Aorta (tissue), 5 donors: ENCODE measurements at regions of chr17 and their contacts with region 1.

Region 1: GRCh38 chr17:13940858-13941665 is 128.2 kb upstream of the COX10 start:
- DNase-seq: no peak
- ATAC-seq: no peak
- H3K4me3 ChIP-seq: no peak overlapping the region
- H3K27ac ChIP-seq: no peak overlapping the region
- H3K4me1 ChIP-seq: no peaks in the 10 kb centered on the region
- H3K27me3 ChIP-seq: no peaks in the 10 kb centered on the region

Region 2: DNA sequence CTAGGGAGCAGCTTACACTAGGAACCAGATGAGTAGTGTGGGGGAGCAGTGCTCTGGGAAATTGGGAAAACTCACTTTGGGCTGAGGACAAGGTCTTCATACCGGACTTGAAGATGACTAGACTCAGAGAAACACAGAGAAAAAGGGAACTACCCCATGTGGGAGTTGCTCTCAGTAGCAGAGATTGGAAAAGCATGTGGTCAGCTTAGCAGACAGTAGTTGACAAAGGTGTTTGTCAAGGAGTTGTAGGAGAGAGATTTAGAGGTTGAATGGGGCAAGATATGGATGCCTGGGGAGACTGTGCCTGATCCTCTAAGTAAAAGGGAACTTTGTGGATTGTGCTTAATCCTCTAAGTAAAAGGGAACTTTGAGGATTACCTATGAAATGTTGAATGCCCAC is 66.2 kb before region 1 on chr17:
- intact Hi-C with region 1: no loop called
- DNase-seq: no peak
- ATAC-seq: no peak
- H3K4me3 ChIP-seq: no peak overlapping the region
- H3K27ac ChIP-seq: no peak overlapping the region
- H3K4me1 ChIP-seq: no peaks in the 10 kb centered on the region
- H3K27me3 ChIP-seq: no peaks in the 10 kb centered on the region

Region 3: DNA sequence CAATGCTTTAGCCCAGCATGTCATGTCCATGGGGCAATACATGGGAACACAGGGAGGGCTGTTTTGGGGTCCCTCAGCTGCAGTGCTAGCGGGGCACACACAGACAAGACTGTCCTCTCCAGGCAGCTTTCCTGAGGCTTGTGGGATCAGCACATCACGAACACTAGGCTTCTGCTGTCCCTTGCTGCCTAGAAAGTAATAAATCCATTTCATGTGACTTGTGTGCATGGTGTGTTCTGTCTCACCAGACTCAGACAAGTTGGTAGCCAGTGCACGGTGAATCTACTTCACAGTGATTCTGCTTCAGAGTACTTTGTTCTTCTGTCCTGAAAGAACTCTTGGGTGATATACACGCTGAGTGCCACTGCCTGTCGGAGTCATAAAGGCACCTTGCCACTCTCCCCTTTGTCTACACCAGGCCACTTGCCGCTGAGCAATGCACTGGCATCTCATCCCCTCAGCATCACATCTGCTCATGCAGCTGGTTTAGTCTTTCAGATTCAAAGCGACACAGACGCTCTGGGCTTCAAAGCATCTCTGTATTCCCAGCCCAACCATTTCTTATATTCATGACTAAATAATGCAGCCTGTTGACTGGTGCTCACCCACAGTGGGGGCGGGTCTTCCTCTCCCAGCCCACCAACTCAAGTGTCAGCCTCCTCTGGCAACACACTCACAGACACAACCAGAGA is 33.0 kb after region 1 on chr17:
- intact Hi-C with region 1: no loop called
- DNase-seq: no peak
- ATAC-seq: no peak
- H3K4me3 ChIP-seq: no peak overlapping the region
- H3K27ac ChIP-seq: no peak overlapping the region
- H3K4me1 ChIP-seq: no peaks in the 10 kb centered on the region
- H3K27me3 ChIP-seq: no peaks in the 10 kb centered on the region

Region 4: DNA sequence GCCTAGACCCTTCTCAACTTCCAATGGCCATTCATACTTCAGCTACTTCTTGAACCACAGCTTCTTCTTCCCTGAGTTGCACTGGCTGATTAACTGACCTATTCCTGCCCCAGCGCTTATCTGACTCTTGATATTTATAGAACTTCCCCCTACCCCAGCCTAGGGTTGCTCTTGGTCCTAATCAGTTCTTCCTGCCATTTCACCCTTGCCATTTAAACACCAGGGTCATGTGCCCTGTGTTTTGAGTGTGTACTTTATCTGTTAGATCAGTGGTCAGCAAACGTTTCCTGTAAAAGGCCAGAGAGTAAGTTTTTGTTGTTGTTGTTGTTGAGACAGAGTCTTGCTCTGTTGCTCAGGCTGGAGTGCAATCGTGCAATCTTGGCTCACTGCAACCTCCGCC is 45.8 kb after region 1 on chr17:
- intact Hi-C with region 1: no loop called
- DNase-seq: no peak
- ATAC-seq: no peak
- H3K4me3 ChIP-seq: no peak overlapping the region
- H3K27ac ChIP-seq: no peak overlapping the region
- H3K4me1 ChIP-seq: no peaks in the 10 kb centered on the region
- H3K27me3 ChIP-seq: no peaks in the 10 kb centered on the region

Region 5: DNA sequence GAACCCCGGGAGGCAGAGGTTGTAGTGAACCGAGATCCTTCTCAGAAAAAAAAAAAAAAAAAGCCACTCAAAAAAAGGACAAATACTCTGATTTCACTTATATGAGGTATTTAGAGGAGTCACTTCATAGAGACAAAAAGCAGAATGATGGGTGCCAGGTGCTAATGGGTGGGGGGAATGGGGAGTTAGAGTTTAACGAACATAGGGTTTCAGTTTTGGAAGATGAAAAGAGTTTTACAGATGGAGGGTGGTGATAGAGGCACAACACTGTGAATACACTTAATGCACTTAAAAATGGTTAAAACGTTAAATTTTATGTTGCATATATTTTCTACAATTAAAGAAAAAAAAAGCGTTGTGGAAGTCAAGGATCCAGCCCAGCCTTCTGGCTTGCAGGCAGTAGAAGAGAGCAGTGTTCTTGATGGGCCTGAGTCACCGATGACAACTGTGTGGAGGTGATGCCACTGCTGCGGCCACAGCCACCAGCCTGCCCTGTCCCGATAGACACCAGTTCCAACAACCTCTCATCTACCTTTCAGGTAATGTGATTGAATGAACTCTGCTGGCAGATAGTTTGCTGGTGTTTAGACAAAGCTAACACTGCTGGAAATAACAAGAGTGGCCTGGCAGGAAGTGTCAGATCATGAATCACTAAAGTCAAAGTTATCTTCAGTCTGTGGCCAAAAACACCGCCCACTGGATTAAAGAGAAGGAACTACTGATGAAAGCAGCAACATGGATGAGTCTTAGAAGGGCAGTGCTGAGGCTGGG is 78.3 kb after region 1 on chr17:
- intact Hi-C with region 1: loop called in 1 of 2 experiments (anchors 10 kb)
- DNase-seq: no peak
- ATAC-seq: no peak
- H3K4me3 ChIP-seq: no peak overlapping the region
- H3K27ac ChIP-seq: no peak overlapping the region
- H3K4me1 ChIP-seq: peaks cover 1 to 2% of the 10 kb centered on the region in 2 donors
- H3K27me3 ChIP-seq: no peaks in the 10 kb centered on the region

Region 6: DNA sequence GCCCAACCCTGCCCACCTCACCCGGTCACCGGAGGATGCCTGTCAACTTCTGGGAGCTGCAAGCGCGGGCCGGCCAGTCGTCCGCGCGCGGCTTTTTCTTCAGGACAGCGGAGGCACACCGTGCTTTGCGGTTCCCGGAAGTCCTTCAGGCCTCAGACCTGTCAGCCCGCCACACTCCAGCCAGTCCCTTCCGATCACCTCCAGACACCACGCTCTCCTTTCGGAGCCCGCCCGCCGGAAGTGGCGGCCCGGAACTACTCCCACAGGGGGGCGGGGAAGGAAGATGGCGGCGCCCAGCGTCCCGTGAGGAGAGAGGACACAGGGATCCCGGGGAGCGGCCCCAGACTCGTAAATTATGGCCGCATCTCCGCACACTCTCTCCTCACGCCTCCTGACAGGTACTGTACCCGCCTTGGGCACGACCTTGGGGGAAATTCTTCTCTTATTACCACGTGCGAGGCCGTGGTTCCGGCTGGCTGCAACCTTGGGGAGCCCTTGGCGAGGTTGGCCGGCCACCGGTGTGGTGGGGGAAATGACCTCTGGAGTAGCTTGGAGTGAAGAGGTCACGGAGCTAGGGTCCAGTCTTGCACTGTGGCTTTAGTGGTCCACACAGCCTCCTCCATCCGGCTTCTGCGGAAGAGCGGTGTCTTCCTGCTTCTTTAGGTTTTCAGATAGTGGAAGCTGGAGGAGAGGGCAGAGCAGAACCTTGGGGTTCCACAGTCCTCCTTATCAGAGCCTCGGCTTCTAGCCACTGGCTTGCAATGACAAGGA is 128.4 kb after region 1 on chr17 and contains the start of gene COX10:
- intact Hi-C with region 1: loop called in 1 of 2 experiments (anchors 10 kb)
- DNase-seq: peak; percentile 90 to 96
- ATAC-seq: peak; percentile 98
- H3K4me3 ChIP-seq: peak within 1 kb of the TSS; percentile 95 to 97
- H3K27ac ChIP-seq: peak within 1 kb of the TSS in 1 of 2 donors; percentile 50
- H3K4me1 ChIP-seq: peaks cover 0 to 8% of the 10 kb centered on the region in 2 donors
- H3K27me3 ChIP-seq: no peaks in the 10 kb centered on the region
- total RNA-seq, gene COX10: 8.6 to 9.9 TPM

Region 7: GRCh38 chr17:14203388-14203787 is 262.3 kb after region 1 on chr17:
- intact Hi-C with region 1: no loop called
- DNase-seq: no peak
- ATAC-seq: no peak
- H3K4me3 ChIP-seq: no peak overlapping the region
- H3K27ac ChIP-seq: no peak overlapping the region
- H3K4me1 ChIP-seq: no peaks in the 10 kb centered on the region
- H3K27me3 ChIP-seq: no peaks in the 10 kb centered on the region